Aorta (tissue), 5 donors: ENCODE measurements at regions of chr2 and their contacts with region 1.

Region 1: GRCh38 chr2:177315364-177315763 is 50.8 kb upstream of the NFE2L2 start:
- DNase-seq: no peak
- ATAC-seq: no peak
- H3K4me3 ChIP-seq: no peak overlapping the region
- H3K27ac ChIP-seq: no peak overlapping the region
- H3K4me1 ChIP-seq: peaks cover 2 to 3% of the 10 kb centered on the region in 2 donors
- H3K27me3 ChIP-seq: no peaks in the 10 kb centered on the region

Region 2: DNA sequence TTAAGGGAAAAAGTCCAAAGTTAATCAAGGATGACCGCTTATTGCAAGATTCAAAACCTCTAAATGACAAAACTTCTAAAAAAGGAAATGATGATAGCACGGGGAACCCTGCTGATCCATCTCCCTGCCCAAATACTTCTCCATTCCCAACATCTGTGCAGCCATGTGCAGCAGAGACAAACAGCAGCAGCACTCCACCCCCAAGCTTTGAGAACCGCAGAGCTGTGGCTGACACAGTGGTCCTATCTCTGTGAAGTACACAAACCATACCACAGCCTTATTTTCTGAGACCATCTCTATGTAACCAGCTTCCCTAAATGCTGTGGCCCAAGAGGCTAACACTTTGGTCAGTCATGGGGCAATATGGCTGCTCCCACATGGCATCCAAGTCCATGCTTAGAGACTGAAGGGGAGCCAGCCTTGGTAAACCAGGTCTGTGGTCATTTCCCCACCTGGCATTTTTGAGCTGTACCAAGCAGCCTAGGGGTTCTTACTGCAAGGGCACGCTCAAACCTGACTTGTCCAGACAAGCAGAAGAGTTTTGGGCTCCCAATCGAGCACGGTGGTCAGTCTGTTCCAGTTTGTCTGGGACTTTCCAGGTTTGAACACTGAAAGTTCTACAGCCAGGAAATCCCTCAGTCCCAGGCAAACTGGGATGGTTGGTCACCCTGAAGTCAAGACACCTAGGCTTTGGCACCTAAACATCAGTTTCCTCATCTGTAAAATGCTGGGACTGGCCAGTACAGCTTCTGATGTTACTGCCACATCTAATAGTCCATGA is 33.8 kb before region 1 on chr2:
- intact Hi-C with region 1: loop called in 1 of 2 experiments (anchors 5 kb)
- DNase-seq: peak in 1 of 2 donors; percentile 74
- ATAC-seq: peak; percentile 44
- H3K4me3 ChIP-seq: no peak overlapping the region
- H3K27ac ChIP-seq: peak overlapping the region in 1 of 2 donors; percentile 67
- H3K4me1 ChIP-seq: peaks cover 7 to 15% of the 10 kb centered on the region in 2 donors
- H3K27me3 ChIP-seq: no peaks in the 10 kb centered on the region